ENCODE measurements at regions of chr18 and their contacts with region 1.

Region 1: GRCh38 chr18:6920099-6920899 is 190.8 kb downstream of the ARHGAP28 start:
- DNase-seq: peak; percentile 61 to 89 (median 87)
- H3K4me3 ChIP-seq: no peak overlapping the region
- H3K27ac ChIP-seq: no peak overlapping the region
- H3K4me1 ChIP-seq: no peaks in the 10 kb centered on the region
- H3K27me3 ChIP-seq: peaks cover 0 to 3% (median 0%) of the 10 kb centered on the region in 5 experiments

Region 2: GRCh38 chr18:6741232-6741663 is 179.1 kb before region 1 on chr18:
- CTCF ChIA-PET with region 1: no interaction called
- POLR2A ChIA-PET with region 1: no interaction called
- DNase-seq: no peak
- H3K4me3 ChIP-seq: no peak overlapping the region
- H3K27ac ChIP-seq: no peak overlapping the region
- H3K4me1 ChIP-seq: no peaks in the 10 kb centered on the region
- H3K27me3 ChIP-seq: no peaks in the 10 kb centered on the region

Region 3: GRCh38 chr18:7000484-7001096 is 80.3 kb after region 1 on chr18:
- CTCF ChIA-PET with region 1: interaction called, 13 read pairs
- POLR2A ChIA-PET with region 1: no interaction called
- DNase-seq: peak; percentile 39 to 68 (median 65)
- H3K4me3 ChIP-seq: peak overlapping the region in 1 of 7 experiments; percentile 61
- H3K27ac ChIP-seq: peak overlapping the region in 1 of 2 experiments; percentile 39
- H3K4me1 ChIP-seq: peaks cover 0 to 14% (median 0%) of the 10 kb centered on the region in 4 experiments
- H3K27me3 ChIP-seq: peaks cover 0 to 3% (median 0%) of the 10 kb centered on the region in 5 experiments

Region 4: GRCh38 chr18:7021994-7022840 is 101.9 kb after region 1 on chr18:
- CTCF ChIA-PET with region 1: interaction called, 33 read pairs
- POLR2A ChIA-PET with region 1: no interaction called
- DNase-seq: peak; percentile 60 to 80 (median 76)
- H3K4me3 ChIP-seq: no peak overlapping the region
- H3K27ac ChIP-seq: no peak overlapping the region
- H3K4me1 ChIP-seq: no peaks in the 10 kb centered on the region
- H3K27me3 ChIP-seq: no peaks in the 10 kb centered on the region

Region 5: GRCh38 chr18:7177116-7177744 is 256.9 kb after region 1 on chr18:
- CTCF ChIA-PET with region 1: interaction called, 33 read pairs
- POLR2A ChIA-PET with region 1: no interaction called
- DNase-seq: peak; percentile 33 to 72 (median 68)
- H3K4me3 ChIP-seq: no peak overlapping the region
- H3K27ac ChIP-seq: no peak overlapping the region
- H3K4me1 ChIP-seq: no peaks in the 10 kb centered on the region
- H3K27me3 ChIP-seq: no peaks in the 10 kb centered on the region

Region 6: DNA sequence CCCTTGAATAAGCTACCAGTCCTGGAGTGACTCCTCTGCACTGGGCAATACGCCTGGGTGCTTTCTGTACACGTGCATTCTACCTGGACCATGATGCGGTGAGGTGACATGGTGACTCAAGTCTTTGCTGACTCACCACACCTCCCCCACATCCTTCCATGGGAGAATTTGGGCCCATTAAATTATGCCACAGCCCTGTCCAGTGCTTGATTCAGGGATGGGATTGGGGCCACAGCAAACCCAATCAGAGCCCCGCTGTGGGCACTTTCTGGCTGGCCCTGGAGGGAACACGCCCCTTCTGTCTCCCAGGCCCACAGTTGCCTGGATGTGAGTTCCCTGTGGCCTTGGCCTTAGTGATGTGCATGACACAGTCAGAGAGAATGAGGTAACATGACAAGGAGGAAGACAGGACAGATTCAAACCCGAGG is 397.5 kb after region 1 on chr18:
- CTCF ChIA-PET with region 1: no interaction called
- POLR2A ChIA-PET with region 1: no interaction called
- DNase-seq: no peak
- H3K4me3 ChIP-seq: no peak overlapping the region
- H3K27ac ChIP-seq: no peak overlapping the region
- H3K4me1 ChIP-seq: peaks cover 0 to under 1% (median 0%) of the 10 kb centered on the region in 4 experiments
- H3K27me3 ChIP-seq: no peaks in the 10 kb centered on the region